ENCODE measurements at regions of chr15 and their contacts with region 1.

Region 1: DNA sequence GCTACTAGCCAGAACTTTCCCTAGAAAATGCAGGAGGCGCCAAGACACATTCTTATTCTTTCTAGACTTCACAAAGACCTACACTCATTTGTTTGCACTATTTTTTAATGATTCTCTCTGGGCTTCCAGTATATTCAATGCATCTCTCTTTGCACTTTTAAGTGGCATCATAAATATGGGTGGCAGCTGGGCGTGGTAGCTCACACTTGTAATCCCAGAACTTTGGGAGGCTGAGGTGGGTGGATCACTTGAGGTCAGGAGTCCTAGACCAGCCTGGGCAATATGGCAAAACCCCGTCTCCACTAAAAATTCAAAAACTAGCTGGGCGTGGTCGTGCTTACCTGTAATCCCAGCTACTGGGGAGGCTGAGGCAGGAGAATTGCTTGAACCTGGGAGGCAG is 5.6 kb upstream of the GCNT3 start:
- DNase-seq: no peak
- H3K4me3 ChIP-seq: no peak overlapping the region
- H3K27ac ChIP-seq: no peak overlapping the region
- H3K4me1 ChIP-seq: no peaks in the 10 kb centered on the region
- H3K27me3 ChIP-seq: no peaks in the 10 kb centered on the region
- CTCF ChIP-seq: no peak

Region 2: GRCh38 chr15:59437817-59438562 is 168.0 kb before region 1 on chr15 and contains the start of gene FAM81A:
- CTCF ChIA-PET with region 1: no interaction called
- POLR2A ChIA-PET with region 1: no interaction called
- intact Hi-C with region 1: no loop called
- DNase-seq: peak; percentile 74
- H3K4me3 ChIP-seq: peak within 1 kb of the TSS; percentile 33
- H3K27ac ChIP-seq: no peak within 1 kb of the TSS
- H3K4me1 ChIP-seq: peaks cover 8% of the 10 kb centered on the region
- H3K27me3 ChIP-seq: peaks cover 69% of the 10 kb centered on the region
- CTCF ChIP-seq: no peak
- total RNA-seq, gene FAM81A: not detected in 2 replicates

Region 3: DNA sequence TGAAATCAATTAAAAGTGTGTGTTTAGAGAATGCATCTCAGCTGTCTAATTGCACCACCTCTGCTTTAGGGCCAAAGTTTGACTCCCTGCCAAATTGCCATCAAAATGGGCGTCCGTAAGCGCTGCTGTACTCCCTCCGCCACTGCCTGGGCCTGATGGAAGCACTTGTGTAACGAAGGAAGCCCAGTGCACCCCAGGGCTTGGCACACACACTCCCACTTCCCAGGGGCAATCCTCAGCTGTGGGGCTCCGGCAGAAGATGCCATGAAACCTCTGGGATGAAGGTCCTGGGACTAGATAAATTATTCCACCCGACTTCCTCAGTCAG is 1485.3 kb after region 1 on chr15:
- CTCF ChIA-PET with region 1: no interaction called
- POLR2A ChIA-PET with region 1: interaction called, 10 read pairs
- intact Hi-C with region 1: no loop called
- DNase-seq: no peak
- H3K4me3 ChIP-seq: peak overlapping the region; percentile 6
- H3K27ac ChIP-seq: no peak overlapping the region
- H3K4me1 ChIP-seq: no peaks in the 10 kb centered on the region
- H3K27me3 ChIP-seq: no peaks in the 10 kb centered on the region
- CTCF ChIP-seq: no peak

Measured in A673 (cell line).